HEK293 (cell line): ENCODE measurements at regions of chr1 and their contacts with region 1.

Region 1: DNA sequence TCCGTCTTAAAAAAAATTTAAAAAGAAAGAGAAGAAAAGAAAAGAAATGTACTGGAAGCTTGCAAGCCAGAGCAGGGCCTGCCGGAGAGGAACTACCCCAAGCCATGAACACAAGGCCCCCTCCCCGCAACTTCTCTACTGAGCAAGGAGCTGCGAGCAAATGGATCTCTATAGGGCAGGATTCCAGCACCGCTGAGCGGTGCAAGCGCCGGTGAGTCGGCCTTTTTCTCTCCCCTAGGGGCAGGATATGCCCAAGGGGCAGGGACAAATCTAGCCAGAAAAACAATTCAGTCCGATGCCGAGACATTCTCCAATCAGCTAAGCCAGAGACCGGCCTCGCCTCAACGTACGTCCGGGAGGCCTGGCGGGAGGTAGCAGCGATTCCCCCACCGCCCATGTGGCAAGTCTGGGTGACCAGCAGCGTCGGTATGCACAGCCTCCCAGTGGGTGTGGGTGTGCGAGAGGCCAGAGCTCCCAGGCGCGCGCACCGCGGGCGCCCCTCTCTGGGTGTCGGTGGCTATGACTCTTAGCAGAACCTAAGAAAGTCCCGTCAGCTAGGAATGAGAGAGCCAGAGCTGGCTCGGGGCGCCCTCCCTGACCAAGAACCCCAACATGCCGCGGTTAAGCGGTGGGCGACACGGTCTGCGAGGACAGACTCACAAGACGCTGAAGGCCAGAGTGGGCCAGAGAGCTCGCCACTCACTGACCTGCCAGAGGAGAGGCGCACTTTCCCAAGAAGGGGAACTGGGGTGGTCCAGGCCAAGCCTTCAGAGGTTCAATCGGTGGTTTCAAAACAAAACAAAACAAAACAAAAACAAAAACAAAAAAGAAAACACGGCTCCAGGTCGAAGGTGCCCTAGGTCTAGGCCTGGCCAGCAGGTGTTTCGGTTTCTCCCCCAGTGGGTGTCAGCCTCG is 1.9 kb downstream of the CSMD2 start:
- H3K4me3 ChIP-seq: peak overlapping the region; percentile 49
- H3K27ac ChIP-seq: no peak overlapping the region
- H3K4me1 ChIP-seq: 0 out of 2 replicates have a peak, but pooled peaks cover 3% of the 10 kb centered on the region
- CTCF ChIP-seq: peak; percentile 77

Region 2: DNA sequence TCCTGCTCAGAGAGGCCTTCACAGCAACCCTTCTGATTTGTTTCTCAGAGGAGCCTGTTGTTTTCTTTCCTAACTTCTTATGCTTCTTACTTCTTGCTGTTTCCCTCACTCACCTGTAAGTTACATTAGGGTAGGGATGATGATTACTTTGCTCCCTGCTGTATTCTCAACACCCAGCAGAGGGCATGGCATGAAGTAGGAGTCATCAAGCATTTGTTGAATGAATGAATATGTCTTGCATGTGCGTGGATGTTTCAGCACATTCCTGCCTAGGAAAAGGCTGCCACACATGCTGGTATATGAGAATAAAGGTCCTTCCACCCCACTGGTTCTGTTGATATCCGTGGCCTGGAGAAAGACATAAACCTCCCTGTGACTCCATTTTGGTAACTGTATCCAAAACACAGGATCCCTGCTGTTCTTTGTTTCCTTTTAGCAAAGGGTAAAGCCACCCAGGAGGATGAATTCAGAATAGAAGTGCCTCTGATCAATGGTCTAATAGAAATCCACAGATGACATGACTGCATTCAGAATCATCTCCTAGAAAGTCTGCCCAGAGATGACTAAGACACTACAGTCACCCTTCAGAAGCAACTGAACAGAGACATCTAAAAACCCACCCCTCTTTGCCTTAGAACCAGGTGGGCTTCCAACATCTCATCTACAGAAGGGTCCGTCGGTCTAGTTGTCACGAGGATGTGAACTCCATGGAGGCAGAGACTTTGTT is 521.8 kb before region 1 on chr1:
- CTCF ChIA-PET with region 1: interaction called, 16 read pairs
- POLR2A ChIA-PET with region 1: no interaction called
- H3K4me3 ChIP-seq: no peak overlapping the region
- H3K27ac ChIP-seq: no peak overlapping the region
- H3K4me1 ChIP-seq: no peaks in the 10 kb centered on the region
- CTCF ChIP-seq: no peak

Region 3: DNA sequence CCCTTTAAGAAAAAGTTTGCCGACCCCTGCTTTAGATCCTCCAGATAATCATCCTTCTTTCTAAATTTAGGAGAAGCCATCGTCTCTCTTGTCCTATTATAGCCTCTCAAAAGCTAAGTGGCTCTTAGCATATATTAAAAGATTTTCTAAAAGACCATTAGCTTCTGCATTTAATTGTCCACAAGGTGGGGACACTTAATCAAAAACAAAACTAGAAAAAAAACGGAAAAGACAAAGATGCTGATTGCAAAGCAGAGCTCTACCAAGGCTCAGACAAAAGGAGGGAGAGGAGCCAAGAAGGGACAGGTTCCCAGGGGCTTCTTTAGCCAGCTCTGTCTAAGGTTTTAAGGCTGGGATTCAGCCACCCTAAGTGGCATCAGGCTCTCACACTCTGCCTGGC is 427.5 kb before region 1 on chr1:
- CTCF ChIA-PET with region 1: interaction called, 10 read pairs
- POLR2A ChIA-PET with region 1: no interaction called
- H3K4me3 ChIP-seq: no peak overlapping the region
- H3K27ac ChIP-seq: no peak overlapping the region
- H3K4me1 ChIP-seq: no peaks in the 10 kb centered on the region
- CTCF ChIP-seq: no peak

Region 4: GRCh38 chr1:34113887-34114286 is 49.2 kb before region 1 on chr1:
- CTCF ChIA-PET with region 1: interaction called, 23 read pairs
- POLR2A ChIA-PET with region 1: interaction called, 5 read pairs
- H3K4me3 ChIP-seq: no peak overlapping the region
- H3K27ac ChIP-seq: no peak overlapping the region
- H3K4me1 ChIP-seq: no peaks in the 10 kb centered on the region
- CTCF ChIP-seq: no peak